ENCODE measurements at regions of chr22 and their contacts with region 1.

Region 1: DNA sequence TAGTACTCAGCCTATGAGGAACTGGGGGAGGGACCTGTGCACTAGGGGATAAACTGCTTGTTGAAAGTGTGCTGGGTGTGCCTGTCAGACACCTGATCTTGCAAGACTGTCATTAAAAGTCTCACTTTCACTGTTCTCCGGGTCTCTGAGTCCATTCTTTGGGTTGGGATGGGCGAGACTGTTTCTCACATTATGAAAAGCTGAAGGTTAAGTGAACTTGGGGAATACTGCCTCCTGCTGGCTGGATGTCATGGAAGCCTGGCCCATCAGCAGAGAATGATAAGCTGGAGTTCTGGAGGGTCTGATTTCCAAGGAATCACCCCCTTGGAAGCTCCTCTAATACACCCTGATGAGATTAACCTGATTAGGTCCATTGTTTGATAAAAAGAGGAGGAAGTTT is 9.0 kb upstream of the VPREB1 start:
- DNase-seq: peak; percentile 63
- ATAC-seq: peak; percentile 44
- H3K4me3 Mint-ChIP-seq: no peak overlapping the region
- H3K27ac Mint-ChIP-seq: no peak overlapping the region
- H3K4me1 Mint-ChIP-seq: peaks cover 15% of the 10 kb centered on the region
- H3K27me3 Mint-ChIP-seq: peaks cover 6% of the 10 kb centered on the region

Region 2: GRCh38 chr22:22195265-22196017 is 40.1 kb before region 1 on chr22:
- CTCF ChIA-PET with region 1: interaction called, 12 read pairs
- POLR2A ChIA-PET with region 1: no interaction called
- DNase-seq: peak; percentile 90
- ATAC-seq: peak; percentile 98
- H3K4me3 Mint-ChIP-seq: no peak overlapping the region
- H3K27ac Mint-ChIP-seq: no peak overlapping the region
- H3K4me1 Mint-ChIP-seq: peaks cover 2% of the 10 kb centered on the region
- H3K27me3 Mint-ChIP-seq: peaks cover 28% of the 10 kb centered on the region

Region 3: DNA sequence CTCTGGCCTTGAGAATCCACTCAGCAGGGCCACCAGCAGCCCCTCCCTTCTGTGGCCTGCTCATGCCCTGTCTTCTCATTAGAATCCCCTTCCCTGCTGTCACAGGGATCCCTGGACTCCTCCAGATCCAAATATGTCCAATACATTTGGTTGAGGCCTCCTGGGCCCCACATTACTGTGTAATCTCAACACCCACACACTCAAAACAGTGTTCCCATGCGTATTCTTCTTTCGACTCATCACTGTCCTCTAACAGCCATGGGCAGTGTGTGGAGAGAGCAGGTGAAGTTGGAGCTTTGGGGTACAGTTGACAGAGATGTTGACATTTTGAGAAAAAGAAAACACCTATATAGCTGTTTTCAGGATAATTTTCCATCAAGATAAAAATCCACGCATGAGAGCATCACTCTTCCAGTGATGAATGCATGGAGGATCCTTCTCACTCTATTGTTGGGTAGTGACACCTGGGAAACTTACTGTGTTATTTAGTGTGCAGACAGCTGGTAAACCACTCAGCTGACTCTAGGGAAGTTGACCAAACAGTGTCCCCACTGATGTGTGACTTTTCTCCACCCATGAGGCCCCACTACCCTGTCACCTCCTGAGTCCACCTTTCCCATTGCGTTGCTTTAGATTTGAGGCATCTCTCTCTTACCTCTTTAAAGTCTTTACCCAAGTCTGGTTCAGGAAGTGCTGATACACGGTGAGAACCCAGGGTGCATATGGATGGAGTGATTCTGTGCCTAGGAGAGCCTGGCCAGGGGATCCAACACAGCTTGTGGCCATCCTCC is 19.7 kb before region 1 on chr22:
- CTCF ChIA-PET with region 1: interaction called, 133 read pairs
- POLR2A ChIA-PET with region 1: interaction called, 4 read pairs
- DNase-seq: peak; percentile 5
- ATAC-seq: no peak
- H3K4me3 Mint-ChIP-seq: no peak overlapping the region
- H3K27ac Mint-ChIP-seq: no peak overlapping the region
- H3K4me1 Mint-ChIP-seq: peaks cover 11% of the 10 kb centered on the region
- H3K27me3 Mint-ChIP-seq: peaks cover 5% of the 10 kb centered on the region

Region 4: DNA sequence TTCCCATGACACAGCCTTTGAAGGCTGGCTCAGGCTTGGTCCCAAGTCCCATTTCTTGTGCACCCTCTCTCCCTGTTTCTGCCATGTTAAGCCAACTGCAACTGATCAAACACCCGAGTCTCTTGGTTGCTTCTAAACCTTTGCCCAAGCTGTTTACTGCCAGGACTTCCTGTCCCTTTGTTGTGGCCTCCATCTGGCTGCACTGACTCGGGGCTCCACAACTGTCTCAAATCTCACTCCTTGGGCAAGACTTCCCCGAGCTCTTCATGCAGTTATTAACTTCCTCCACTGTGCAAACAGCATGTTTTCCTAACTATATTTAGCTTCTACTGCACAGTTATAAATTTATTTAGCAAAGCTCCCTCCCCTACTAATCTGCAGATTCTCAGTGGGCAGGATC is 13.3 kb after region 1 on chr22:
- CTCF ChIA-PET with region 1: interaction called, 18 read pairs
- POLR2A ChIA-PET with region 1: no interaction called
- DNase-seq: peak; percentile 61
- ATAC-seq: peak; percentile 88
- H3K4me3 Mint-ChIP-seq: peak overlapping the region; percentile 20
- H3K27ac Mint-ChIP-seq: peak overlapping the region; percentile 43
- H3K4me1 Mint-ChIP-seq: peaks cover 29% of the 10 kb centered on the region
- H3K27me3 Mint-ChIP-seq: no peaks in the 10 kb centered on the region

Region 5: DNA sequence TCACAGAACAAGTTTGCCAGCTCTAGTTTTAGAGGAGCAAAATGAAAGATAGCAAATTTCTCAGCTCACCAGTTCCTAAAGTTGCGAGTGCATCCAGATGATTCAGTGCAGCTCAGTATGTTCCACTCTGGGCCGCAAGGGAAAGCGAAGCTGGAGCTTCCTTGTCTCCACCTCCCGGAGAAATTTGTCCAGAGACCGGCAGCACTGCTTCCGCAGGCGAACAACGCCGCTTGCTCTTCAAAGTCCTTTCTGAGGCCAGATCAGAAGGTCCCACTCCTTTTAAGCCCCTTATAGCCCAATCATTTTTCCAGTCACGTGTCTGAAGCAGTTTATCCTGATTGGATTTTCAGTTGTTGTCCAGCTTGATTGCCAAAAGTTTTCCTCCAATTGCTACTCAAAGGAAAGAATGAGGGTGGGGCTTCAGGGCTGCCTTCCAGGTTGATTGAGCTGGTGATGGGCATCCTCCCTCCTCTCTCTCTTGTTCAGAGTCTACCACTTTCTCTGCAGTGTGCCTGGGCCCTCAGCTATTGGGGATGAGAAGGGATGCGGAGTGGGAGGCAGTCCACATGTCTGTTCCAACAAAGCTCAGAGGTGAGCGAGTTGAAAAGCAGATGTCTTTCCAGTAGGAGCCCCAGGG is 284.6 kb after region 1 on chr22 and contains the start of gene ZNF280A:
- CTCF ChIA-PET with region 1: no interaction called
- POLR2A ChIA-PET with region 1: no interaction called
- DNase-seq: no peak
- ATAC-seq: no peak
- H3K4me3 Mint-ChIP-seq: no peak within 1 kb of the TSS
- H3K27ac Mint-ChIP-seq: no peak within 1 kb of the TSS
- H3K4me1 Mint-ChIP-seq: no peaks in the 10 kb centered on the region
- H3K27me3 Mint-ChIP-seq: peaks cover 23% of the 10 kb centered on the region
- total RNA-seq, gene ZNF280A: not detected

Region 6: GRCh38 chr22:22684580-22685561 is 449.3 kb after region 1 on chr22:
- CTCF ChIA-PET with region 1: no interaction called
- POLR2A ChIA-PET with region 1: no interaction called
- DNase-seq: peak; percentile 30
- ATAC-seq: peak; percentile 55
- H3K4me3 Mint-ChIP-seq: no peak overlapping the region
- H3K27ac Mint-ChIP-seq: no peak overlapping the region
- H3K4me1 Mint-ChIP-seq: no peaks in the 10 kb centered on the region
- H3K27me3 Mint-ChIP-seq: peaks cover 3% of the 10 kb centered on the region